Sigmoid colon (tissue), 7 donors: ENCODE measurements at regions of chr20 and their contacts with region 1.

Region 1: DNA sequence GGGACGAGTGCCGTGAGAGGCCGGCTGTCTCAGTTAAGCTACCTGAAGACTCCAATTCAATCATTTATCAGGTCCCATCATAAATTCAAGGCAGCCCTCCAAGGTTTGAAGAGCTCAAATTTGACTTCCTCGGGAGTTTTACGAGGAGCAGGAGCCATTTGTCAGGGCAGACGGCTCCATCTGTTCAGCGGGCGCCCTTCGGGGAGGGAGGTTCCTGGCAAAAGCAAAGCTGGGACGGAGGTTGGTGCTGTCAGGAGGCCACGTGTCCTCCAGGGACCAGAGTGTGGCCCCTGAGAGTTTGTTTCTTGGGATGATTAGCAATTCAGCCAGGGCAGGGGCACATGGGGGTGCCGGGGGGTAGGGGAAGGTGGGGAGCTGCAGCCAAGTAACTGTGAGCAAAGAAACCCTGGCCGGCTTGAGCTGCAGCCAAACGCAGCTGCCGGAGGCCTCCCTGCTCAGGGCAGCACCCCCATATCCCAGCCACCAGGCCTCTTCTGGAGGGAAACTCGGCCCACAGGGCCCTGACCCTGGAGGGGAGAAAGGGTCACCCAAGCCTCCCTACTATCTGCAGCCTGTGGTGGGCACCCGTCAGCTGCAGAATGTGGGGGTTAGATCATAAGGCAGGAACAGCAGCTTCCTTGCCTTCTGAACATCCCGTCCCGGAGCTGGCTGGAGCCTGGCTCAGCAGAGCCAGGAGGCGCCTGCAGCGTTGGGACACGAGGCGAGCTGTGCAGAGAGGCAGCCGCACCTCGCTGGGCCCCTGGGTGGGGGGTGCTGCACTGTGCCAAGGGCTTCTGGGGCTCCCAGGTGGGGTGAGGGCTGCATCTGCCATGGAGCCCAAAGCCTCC is 63.6 kb upstream of the GATA5 start:
- DNase-seq: peak; percentile 84
- H3K4me3 ChIP-seq: peak overlapping the region in 1 of 4 donors; percentile 9
- H3K27ac ChIP-seq: peak overlapping the region in 3 of 4 donors; percentile 83 to 87 (median 85)
- H3K4me1 ChIP-seq: peaks cover 0 to 85% (median 60%) of the 10 kb centered on the region in 4 donors
- H3K27me3 ChIP-seq: no peaks in the 10 kb centered on the region
- CTCF ChIP-seq: no peak
- EP300 ChIP-seq: peak in 1 of 4 donors; percentile 40
- POLR2A ChIP-seq: no peak

Region 2: GRCh38 chr20:62555642-62556420 is 16.4 kb after region 1 on chr20:
- intact Hi-C with region 1: loop called (anchors 2 kb)
- DNase-seq: no peak
- H3K4me3 ChIP-seq: peak overlapping the region in 1 of 4 donors; percentile 17
- H3K27ac ChIP-seq: peak overlapping the region; percentile 61 to 97 (median 93)
- H3K4me1 ChIP-seq: peaks cover 0 to 100% (median 90%) of the 10 kb centered on the region in 4 donors
- H3K27me3 ChIP-seq: peaks cover 0 to 26% (median 4%) of the 10 kb centered on the region in 3 donors
- CTCF ChIP-seq: no peak
- EP300 ChIP-seq: no peak
- POLR2A ChIP-seq: no peak